ENCODE measurements at regions of chr20 and their contacts with region 1.

Region 1: GRCh38 chr20:35771689-35772562 is at the start of gene PHF20:
- DNase-seq: peak; percentile 97 to 98 (median 98)
- ATAC-seq: peak; percentile 94
- H3K4me3 ChIP-seq: peak within 1 kb of the TSS; percentile 70
- H3K27ac ChIP-seq: peak within 1 kb of the TSS; percentile 86
- H3K4me1 ChIP-seq: peaks cover 26 to 46% of the 10 kb centered on the region in 2 experiments
- H3K27me3 ChIP-seq: no peaks in the 10 kb centered on the region
- CTCF ChIP-seq: no peak
- EP300 ChIP-seq: no peak; the same call in 1 of the 2 replicates
- POLR2A ChIP-seq: 0 out of 2 replicates have a peak, but pooled peaks have one; percentile 52
- RAD21 ChIP-seq: no peak
- polyA plus RNA-seq, gene PHF20: 178 to 196 TPM

Region 2: DNA sequence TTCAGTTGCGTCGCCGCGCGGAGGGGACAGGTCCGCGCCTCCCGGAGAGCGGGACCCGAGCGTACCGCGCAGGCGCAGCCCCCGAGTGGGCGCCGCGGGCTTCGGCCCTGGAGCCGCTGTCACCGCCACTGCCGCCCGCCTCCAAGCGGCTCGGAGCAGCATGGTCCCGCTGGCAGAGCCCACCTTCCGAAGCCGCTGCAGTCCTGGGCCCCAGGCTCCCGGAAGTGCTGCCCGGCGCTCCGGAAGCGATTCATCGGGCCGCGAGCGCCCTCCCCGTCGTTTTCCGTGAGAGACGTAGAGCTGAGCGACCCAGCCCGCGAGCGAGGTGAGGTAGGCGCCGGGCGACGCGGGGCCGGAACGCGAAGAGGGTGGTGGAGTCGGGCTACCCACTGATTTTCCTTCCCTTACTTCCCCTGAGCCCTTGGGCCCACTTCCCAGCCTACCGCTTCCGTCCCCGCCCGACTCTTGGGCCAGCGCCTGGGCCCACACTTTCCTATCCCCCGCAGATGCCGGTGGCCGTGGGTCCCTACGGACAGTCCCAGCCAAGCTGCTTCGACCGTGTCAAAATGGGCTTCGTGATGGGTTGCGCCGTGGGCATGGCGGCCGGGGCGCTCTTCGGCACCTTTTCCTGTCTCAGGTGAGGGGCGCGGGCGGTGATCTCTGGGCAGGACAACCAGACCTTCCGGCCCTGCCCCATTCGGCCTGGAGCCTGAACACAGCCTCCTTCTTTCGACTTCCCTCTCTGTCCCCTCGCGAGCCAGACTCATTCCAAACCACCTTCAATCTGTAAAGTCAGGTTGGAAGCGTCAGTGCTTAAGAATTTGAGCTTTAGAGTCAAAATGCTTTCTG is 72.6 kb before region 1 on chr20 and contains the starts of genes NFS1 and ROMO1:
- CTCF ChIA-PET with region 1: no interaction called
- POLR2A ChIA-PET with region 1: no interaction called
- in situ Hi-C with region 1: no loop called
- intact Hi-C with region 1: no loop called
- DNase-seq: peak; percentile 90 to 97 (median 94)
- ATAC-seq: peak; percentile 94
- H3K4me3 ChIP-seq: peak within 1 kb of the TSS; percentile 96
- H3K27ac ChIP-seq: peak within 1 kb of the TSS; percentile 92
- H3K4me1 ChIP-seq: peaks cover 10 to 14% of the 10 kb centered on the region in 2 experiments; a peak in 4 of 5 replicates
- H3K27me3 ChIP-seq: no peaks in the 10 kb centered on the region
- CTCF ChIP-seq: peak; percentile 29 to 34 (median 32); a peak in 5 of 6 replicates
- EP300 ChIP-seq: no peak
- POLR2A ChIP-seq: peak; percentile 91
- RAD21 ChIP-seq: no peak
- polyA plus RNA-seq, gene NFS1: 11.5 to 13.9 TPM
- polyA plus RNA-seq, gene ROMO1: 635 to 741 TPM

Region 3: DNA sequence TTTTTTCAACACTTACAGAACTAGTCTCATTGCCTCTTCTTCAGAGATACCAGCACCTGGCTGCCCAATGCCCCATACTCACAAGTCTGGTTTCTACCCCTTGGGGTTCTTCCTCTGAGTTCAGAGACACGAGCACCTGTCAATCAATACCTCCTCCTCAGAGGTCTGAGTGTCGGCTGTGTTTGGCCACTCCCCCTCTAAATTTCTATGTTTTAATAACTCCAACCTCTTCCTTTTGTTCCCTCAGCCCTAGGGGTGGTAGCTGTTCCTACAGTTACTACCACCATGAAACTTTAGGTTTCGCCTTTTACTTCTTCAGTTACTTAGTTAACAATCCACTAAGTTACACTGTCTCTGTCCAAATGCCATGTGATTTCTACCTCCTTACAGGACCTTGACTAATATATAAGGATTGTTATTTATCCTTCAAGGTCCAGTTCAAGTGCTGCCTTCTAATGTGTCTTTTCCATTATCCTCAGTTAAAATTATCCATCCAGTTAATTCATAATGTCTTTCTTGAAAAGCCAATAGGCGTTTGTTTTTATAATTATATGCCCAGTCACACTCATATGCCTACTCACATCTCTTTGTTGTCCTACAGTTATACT is 14.7 kb before region 1 on chr20:
- CTCF ChIA-PET with region 1: no interaction called
- POLR2A ChIA-PET with region 1: interaction called, 10 read pairs
- in situ Hi-C with region 1: no loop called
- intact Hi-C with region 1: no loop called
- DNase-seq: peak in 1 of 4 experiments; percentile 18
- ATAC-seq: peak; percentile 73
- H3K4me3 ChIP-seq: no peak overlapping the region
- H3K27ac ChIP-seq: no peak overlapping the region
- H3K4me1 ChIP-seq: peaks cover 0 to 4% of the 10 kb centered on the region in 2 experiments; a peak in 2 of 5 replicates
- H3K27me3 ChIP-seq: no peaks in the 10 kb centered on the region
- CTCF ChIP-seq: no peak
- EP300 ChIP-seq: no peak
- POLR2A ChIP-seq: no peak
- RAD21 ChIP-seq: no peak

Region 4: GRCh38 chr20:35878113-35878625 is 106.2 kb after region 1 on chr20:
- CTCF ChIA-PET with region 1: no interaction called
- POLR2A ChIA-PET with region 1: no interaction called
- in situ Hi-C with region 1: no loop called
- intact Hi-C with region 1: loop called (anchors 5 kb)
- DNase-seq: no peak
- ATAC-seq: no peak
- H3K4me3 ChIP-seq: no peak overlapping the region
- H3K27ac ChIP-seq: no peak overlapping the region
- H3K4me1 ChIP-seq: peaks cover 6 to 14% of the 10 kb centered on the region in 2 experiments
- H3K27me3 ChIP-seq: no peaks in the 10 kb centered on the region
- CTCF ChIP-seq: no peak
- EP300 ChIP-seq: no peak
- POLR2A ChIP-seq: no peak
- RAD21 ChIP-seq: no peak

Region 5: DNA sequence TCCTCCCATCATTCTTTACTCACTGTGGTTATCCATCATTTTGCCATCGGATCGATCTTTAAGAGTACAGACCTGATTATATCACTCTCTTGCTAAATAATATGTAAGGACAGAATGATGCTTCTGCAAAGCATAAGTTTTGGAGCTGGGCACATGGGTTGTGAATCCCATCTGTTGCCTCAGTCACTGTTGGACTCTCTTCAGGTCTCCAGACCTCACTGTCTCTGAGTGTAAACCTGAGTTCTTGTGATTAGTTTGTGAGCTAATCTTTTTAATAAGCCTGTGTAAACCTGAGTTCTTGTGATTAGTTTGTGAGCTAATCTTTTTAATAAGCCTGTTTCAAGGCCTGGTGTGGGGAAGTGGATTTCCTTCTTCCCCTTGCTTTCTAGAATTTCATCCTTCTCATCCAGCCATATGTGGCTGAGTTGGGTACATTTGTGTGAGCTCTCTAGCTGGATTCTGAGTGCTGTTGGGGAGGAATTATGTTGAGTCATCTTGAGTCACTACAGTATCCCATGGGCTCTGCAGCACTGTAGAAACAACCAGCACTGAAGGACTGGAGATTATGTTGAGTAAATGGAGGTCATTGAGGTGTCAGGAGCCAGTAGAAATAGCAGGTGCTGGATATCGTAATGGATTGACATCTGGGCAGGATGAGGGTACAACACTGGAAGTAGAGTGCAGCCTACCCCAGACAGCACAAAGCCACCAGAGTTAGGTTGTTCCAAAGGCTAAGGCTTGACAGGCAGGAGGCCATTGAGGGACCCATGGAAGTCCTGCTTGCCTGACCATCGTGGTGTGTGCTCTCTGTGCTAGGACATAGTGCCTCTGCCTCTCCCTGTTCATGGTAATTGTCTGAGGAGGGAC is 130.0 kb after region 1 on chr20:
- CTCF ChIA-PET with region 1: no interaction called
- POLR2A ChIA-PET with region 1: interaction called, 3 read pairs
- in situ Hi-C with region 1: no loop called
- intact Hi-C with region 1: loop called (anchors 10 kb)
- DNase-seq: peak; percentile 49 to 85 (median 68)
- ATAC-seq: peak; percentile 94
- H3K4me3 ChIP-seq: no peak overlapping the region
- H3K27ac ChIP-seq: peak overlapping the region; percentile 78
- H3K4me1 ChIP-seq: peaks cover 19 to 41% of the 10 kb centered on the region in 2 experiments; a peak in 4 of 5 replicates
- H3K27me3 ChIP-seq: no peaks in the 10 kb centered on the region
- CTCF ChIP-seq: no peak
- EP300 ChIP-seq: peak; percentile 48
- POLR2A ChIP-seq: 0 out of 2 replicates have a peak, but pooled peaks have one; percentile 42
- RAD21 ChIP-seq: no peak

Measured in K562 (cell line).